ENCODE measurements at regions of chr20 and their contacts with region 1.

Region 1: GRCh38 chr20:24027229-24027628 is 38.6 kb upstream of the GGTLC1 start:
- DNase-seq: peak in 1 of 6 donors; percentile 30
- ATAC-seq: peak in 3 of 4 donors; percentile 24 to 64 (median 48)
- H3K4me3 ChIP-seq: no peak overlapping the region
- H3K27ac ChIP-seq: no peak overlapping the region
- H3K4me1 ChIP-seq: no peaks in the 10 kb centered on the region
- H3K27me3 ChIP-seq: no peaks in the 10 kb centered on the region
- CTCF ChIP-seq: no peak

Region 2: DNA sequence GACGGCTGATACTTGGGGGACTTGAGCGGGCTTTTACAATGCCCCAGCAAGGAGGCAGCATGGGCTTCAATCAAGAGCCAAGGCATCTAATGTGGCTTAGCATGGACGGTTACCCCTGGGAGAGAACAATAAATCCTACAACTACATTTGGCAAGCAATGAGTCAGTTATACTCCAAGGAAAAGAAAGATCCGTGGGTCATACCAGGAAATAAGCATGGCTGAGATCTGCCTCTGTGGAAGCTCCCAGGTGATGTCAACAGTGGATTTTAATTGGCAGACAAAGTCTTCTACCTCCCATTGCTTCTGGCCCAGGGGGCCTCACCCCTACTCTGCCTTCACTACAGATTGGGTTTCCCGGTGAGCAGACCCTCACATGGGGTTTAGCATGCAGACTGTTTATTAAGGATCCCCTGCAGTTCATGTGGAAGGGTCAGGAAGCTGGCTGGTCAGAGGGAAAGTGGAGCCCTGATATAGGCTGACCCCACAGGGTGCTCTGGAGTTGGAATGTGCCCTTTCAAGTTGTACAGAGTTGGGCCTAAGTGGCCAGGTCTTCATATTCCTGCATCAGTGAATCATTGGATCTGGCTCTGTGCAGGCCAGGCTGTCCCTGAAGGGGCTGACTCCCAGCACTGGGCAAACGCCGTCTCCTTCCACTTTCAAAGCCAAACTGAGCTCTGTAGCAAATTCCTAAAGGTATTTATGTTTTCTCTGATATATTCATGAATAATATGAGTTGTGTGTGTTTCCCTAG is 52.6 kb after region 1 on chr20:
- intact Hi-C with region 1: loop called in 1 of 3 experiments (anchors 10 kb)
- DNase-seq: no peak
- ATAC-seq: no peak
- H3K4me3 ChIP-seq: no peak overlapping the region
- H3K27ac ChIP-seq: no peak overlapping the region
- H3K4me1 ChIP-seq: no peaks in the 10 kb centered on the region
- H3K27me3 ChIP-seq: no peaks in the 10 kb centered on the region
- CTCF ChIP-seq: no peak

Measured in pancreas (tissue), 10 donors.